Mammary epithelial cell (primary cell): ENCODE measurements at regions of chr20 and their contacts with region 1.

Region 1: GRCh38 chr20:50153485-50154377 is at the start of gene PEDS1:
- DNase-seq: peak; percentile 91
- H3K4me3 ChIP-seq: peak within 1 kb of the TSS; percentile 80 to 94 (median 90)
- H3K27ac ChIP-seq: peak within 1 kb of the TSS; percentile 89
- H3K4me1 ChIP-seq: peaks cover 39% of the 10 kb centered on the region
- H3K27me3 ChIP-seq: no peaks in the 10 kb centered on the region
- CTCF ChIP-seq: no peak
- total RNA-seq, gene PEDS1: 28.8 to 29.5 TPM

Region 2: GRCh38 chr20:50070991-50071888 is 82.5 kb before region 1 on chr20:
- CTCF ChIA-PET with region 1: interaction called, 3 read pairs
- dilution Hi-C with region 1: no loop called
- in situ Hi-C with region 1: no loop called
- intact Hi-C with region 1: loop called (anchors 2 kb)
- DNase-seq: peak; percentile 68
- H3K4me3 ChIP-seq: peak overlapping the region; percentile 23 to 46 (median 42)
- H3K27ac ChIP-seq: no peak overlapping the region
- H3K4me1 ChIP-seq: no peaks in the 10 kb centered on the region
- H3K27me3 ChIP-seq: no peaks in the 10 kb centered on the region
- CTCF ChIP-seq: peak; percentile 95 to 98

Region 3: GRCh38 chr20:50085452-50086365 is 68.0 kb before region 1 on chr20:
- CTCF ChIA-PET with region 1: no interaction called
- dilution Hi-C with region 1: no loop called
- in situ Hi-C with region 1: no loop called
- intact Hi-C with region 1: loop called (anchors 1 kb)
- DNase-seq: peak; percentile 42
- H3K4me3 ChIP-seq: no peak overlapping the region
- H3K27ac ChIP-seq: peak overlapping the region; percentile 71
- H3K4me1 ChIP-seq: peaks cover 24% of the 10 kb centered on the region
- H3K27me3 ChIP-seq: no peaks in the 10 kb centered on the region
- CTCF ChIP-seq: peak; percentile 84 to 88

Region 4: GRCh38 chr20:50110141-50110925 is 43.4 kb before region 1 on chr20:
- CTCF ChIA-PET with region 1: no interaction called
- dilution Hi-C with region 1: no loop called
- in situ Hi-C with region 1: no loop called
- intact Hi-C with region 1: no loop called
- DNase-seq: peak; percentile 84
- H3K4me3 ChIP-seq: no peak overlapping the region
- H3K27ac ChIP-seq: peak overlapping the region; percentile 88
- H3K4me1 ChIP-seq: peaks cover 46% of the 10 kb centered on the region
- H3K27me3 ChIP-seq: no peaks in the 10 kb centered on the region
- CTCF ChIP-seq: no peak

Region 5: GRCh38 chr20:50120897-50121693 is 32.6 kb before region 1 on chr20:
- CTCF ChIA-PET with region 1: interaction called, 14 read pairs
- dilution Hi-C with region 1: no loop called
- in situ Hi-C with region 1: no loop called
- intact Hi-C with region 1: loop called (anchors 1 kb)
- DNase-seq: no peak
- H3K4me3 ChIP-seq: no peak overlapping the region
- H3K27ac ChIP-seq: no peak overlapping the region
- H3K4me1 ChIP-seq: peaks cover 4% of the 10 kb centered on the region
- H3K27me3 ChIP-seq: no peaks in the 10 kb centered on the region
- CTCF ChIP-seq: peak; percentile 96 to 99